ENCODE measurements at regions of chr1 and their contacts with region 1.

Region 1: GRCh38 chr1:175023043-175023921 is at the start of gene MRPS14:
- DNase-seq: peak; percentile 96 to 99 (median 98)
- ATAC-seq: peak; percentile 91
- H3K4me3 ChIP-seq: peak within 1 kb of the TSS; percentile 72 to 96
- H3K4me3 Mint-ChIP-seq: peak within 1 kb of the TSS; percentile 91
- H3K27ac ChIP-seq: peak within 1 kb of the TSS; percentile 83 to 93
- H3K27ac Mint-ChIP-seq: peak within 1 kb of the TSS; percentile 94
- H3K4me1 ChIP-seq: peaks cover 6% of the 10 kb centered on the region
- H3K4me1 Mint-ChIP-seq: peaks cover 32% of the 10 kb centered on the region
- H3K27me3 ChIP-seq: no peaks in the 10 kb centered on the region
- H3K27me3 Mint-ChIP-seq: no peaks in the 10 kb centered on the region
- CTCF ChIP-seq: no peak
- total RNA-seq, gene MRPS14: 6.8 to 7.3 TPM

Region 2: GRCh38 chr1:173476664-173477285 is 1546.5 kb before region 1 on chr1:
- CTCF ChIA-PET with region 1: no interaction called
- POLR2A ChIA-PET with region 1: no interaction called
- intact Hi-C with region 1: loop called in 1 of 2 experiments (anchors 10 kb)
- DNase-seq: peak; percentile 51 to 91 (median 73)
- ATAC-seq: peak; percentile 76
- H3K4me3 ChIP-seq: peak overlapping the region; percentile 71 to 83
- H3K4me3 Mint-ChIP-seq: peak overlapping the region; percentile 93
- H3K27ac ChIP-seq: peak overlapping the region; percentile 70 to 91
- H3K27ac Mint-ChIP-seq: peak overlapping the region; percentile 95
- H3K4me1 ChIP-seq: peaks cover 54% of the 10 kb centered on the region
- H3K4me1 Mint-ChIP-seq: peaks cover 75% of the 10 kb centered on the region
- H3K27me3 ChIP-seq: no peaks in the 10 kb centered on the region
- H3K27me3 Mint-ChIP-seq: no peaks in the 10 kb centered on the region
- CTCF ChIP-seq: no peak

Region 3: GRCh38 chr1:173867753-173868265 is 1155.5 kb before region 1 on chr1 and contains the start of gene GAS5:
- CTCF ChIA-PET with region 1: no interaction called
- POLR2A ChIA-PET with region 1: no interaction called
- intact Hi-C with region 1: loop called (anchors 5 kb)
- DNase-seq: peak; percentile 97 to 99 (median 98)
- ATAC-seq: peak; percentile 78
- H3K4me3 ChIP-seq: peak within 1 kb of the TSS; percentile 74 to 93
- H3K4me3 Mint-ChIP-seq: peak within 1 kb of the TSS; percentile 95
- H3K27ac ChIP-seq: peak within 1 kb of the TSS; percentile 75 to 93
- H3K27ac Mint-ChIP-seq: peak within 1 kb of the TSS; percentile 96
- H3K4me1 ChIP-seq: peaks cover 61% of the 10 kb centered on the region
- H3K4me1 Mint-ChIP-seq: peaks cover 70% of the 10 kb centered on the region
- H3K27me3 ChIP-seq: no peaks in the 10 kb centered on the region
- H3K27me3 Mint-ChIP-seq: no peaks in the 10 kb centered on the region
- CTCF ChIP-seq: no peak
- total RNA-seq, gene GAS5: 774 to 800 TPM

Region 4: DNA sequence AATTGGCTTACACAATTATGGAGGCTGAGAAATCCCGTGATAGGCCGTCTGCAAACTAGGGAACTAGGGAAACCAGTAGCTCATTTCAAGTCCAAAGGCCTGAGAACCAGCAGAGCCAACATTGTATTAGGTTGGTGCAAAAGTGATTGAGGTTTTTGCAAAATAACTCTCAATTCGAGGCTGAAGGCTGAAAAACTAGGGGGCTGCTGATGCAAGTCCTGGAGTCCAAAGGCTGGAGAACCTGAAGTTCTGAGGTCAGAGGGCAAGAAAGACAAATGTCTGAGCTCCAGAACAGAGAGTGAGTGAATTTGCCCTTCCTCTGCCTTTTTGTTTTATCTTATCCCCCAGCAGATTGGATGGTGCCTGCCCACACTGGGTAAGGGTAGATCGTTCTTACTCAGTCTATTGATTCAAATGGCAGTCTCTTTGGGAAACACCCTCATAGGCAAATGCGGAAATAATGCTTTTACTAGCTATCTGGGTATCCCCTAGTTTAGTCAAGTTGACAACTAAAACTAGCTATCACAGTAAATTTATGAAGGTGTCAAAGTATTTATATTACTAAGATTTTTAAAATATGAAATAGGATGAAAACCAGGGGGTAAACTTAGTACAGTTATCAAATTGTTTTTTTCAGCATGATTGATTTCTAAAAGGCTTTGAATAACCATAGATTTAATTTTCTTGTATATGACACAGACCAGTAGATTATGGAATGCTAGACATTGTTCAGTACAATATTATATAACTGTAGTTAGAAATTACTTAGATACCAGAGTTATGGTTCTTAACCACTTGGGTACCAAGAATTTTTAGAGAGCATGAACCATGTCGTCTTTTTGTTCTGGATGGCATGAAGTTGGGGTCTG is 848.6 kb before region 1 on chr1:
- CTCF ChIA-PET with region 1: no interaction called
- POLR2A ChIA-PET with region 1: no interaction called
- intact Hi-C with region 1: no loop called
- DNase-seq: peak in 1 of 9 experiments; percentile 24
- ATAC-seq: no peak
- H3K4me3 ChIP-seq: no peak overlapping the region
- H3K4me3 Mint-ChIP-seq: no peak overlapping the region
- H3K27ac ChIP-seq: no peak overlapping the region
- H3K27ac Mint-ChIP-seq: no peak overlapping the region
- H3K4me1 ChIP-seq: no peaks in the 10 kb centered on the region
- H3K4me1 Mint-ChIP-seq: peaks cover 60% of the 10 kb centered on the region
- H3K27me3 ChIP-seq: no peaks in the 10 kb centered on the region
- H3K27me3 Mint-ChIP-seq: no peaks in the 10 kb centered on the region
- CTCF ChIP-seq: no peak

Region 5: GRCh38 chr1:174968750-174969244 is 54.5 kb before region 1 on chr1:
- CTCF ChIA-PET with region 1: no interaction called
- POLR2A ChIA-PET with region 1: interaction called, 20 read pairs
- intact Hi-C with region 1: loop called in 1 of 2 experiments (anchors 2 kb)
- DNase-seq: peak in 6 of 9 experiments; percentile 27 to 92 (median 53)
- ATAC-seq: peak; percentile 48
- H3K4me3 ChIP-seq: peak overlapping the region; percentile 2 to 16
- H3K4me3 Mint-ChIP-seq: peak overlapping the region; percentile 77
- H3K27ac ChIP-seq: peak overlapping the region; percentile 59 to 89
- H3K27ac Mint-ChIP-seq: peak overlapping the region; percentile 98
- H3K4me1 ChIP-seq: peaks cover 73% of the 10 kb centered on the region
- H3K4me1 Mint-ChIP-seq: peaks cover 76% of the 10 kb centered on the region
- H3K27me3 ChIP-seq: no peaks in the 10 kb centered on the region
- H3K27me3 Mint-ChIP-seq: no peaks in the 10 kb centered on the region
- CTCF ChIP-seq: no peak

Region 6: GRCh38 chr1:175124861-175125260 is 101.6 kb after region 1 on chr1:
- CTCF ChIA-PET with region 1: interaction called, 42 read pairs
- POLR2A ChIA-PET with region 1: interaction called, 3 read pairs
- intact Hi-C with region 1: no loop called
- DNase-seq: no peak
- ATAC-seq: no peak
- H3K4me3 ChIP-seq: no peak overlapping the region
- H3K4me3 Mint-ChIP-seq: no peak overlapping the region
- H3K27ac ChIP-seq: no peak overlapping the region
- H3K27ac Mint-ChIP-seq: no peak overlapping the region
- H3K4me1 ChIP-seq: no peaks in the 10 kb centered on the region
- H3K4me1 Mint-ChIP-seq: no peaks in the 10 kb centered on the region
- H3K27me3 ChIP-seq: no peaks in the 10 kb centered on the region
- H3K27me3 Mint-ChIP-seq: peaks cover 6% of the 10 kb centered on the region
- CTCF ChIP-seq: no peak

Region 7: GRCh38 chr1:176206961-176207902 is 1184.0 kb after region 1 on chr1 and contains the start of gene COP1:
- CTCF ChIA-PET with region 1: no interaction called
- POLR2A ChIA-PET with region 1: interaction called, 3 read pairs
- intact Hi-C with region 1: loop called (anchors 2 kb)
- DNase-seq: peak; percentile 94 to 99 (median 97)
- ATAC-seq: peak; percentile 78
- H3K4me3 ChIP-seq: peak within 1 kb of the TSS; percentile 91 to 98
- H3K4me3 Mint-ChIP-seq: peak within 1 kb of the TSS; percentile 99
- H3K27ac ChIP-seq: peak within 1 kb of the TSS; percentile 91 to 96
- H3K27ac Mint-ChIP-seq: peak within 1 kb of the TSS; percentile 99
- H3K4me1 ChIP-seq: peaks cover 32% of the 10 kb centered on the region
- H3K4me1 Mint-ChIP-seq: peaks cover 42% of the 10 kb centered on the region
- H3K27me3 ChIP-seq: no peaks in the 10 kb centered on the region
- H3K27me3 Mint-ChIP-seq: no peaks in the 10 kb centered on the region
- CTCF ChIP-seq: no peak
- total RNA-seq, gene COP1: 33.7 to 36.3 TPM

Measured in CD8-positive, alpha-beta T cell (primary cell).